ENCODE measurements at regions of chr19 and their contacts with region 1.

Region 1: GRCh38 chr19:35154525-35155406 is at the start of gene FXYD5:
- DNase-seq: peak in 1 of 2 donors; percentile 32
- ATAC-seq: peak in 1 of 2 donors; percentile 59
- H3K4me3 ChIP-seq: peak within 1 kb of the TSS; percentile 53 to 69 (median 56)
- H3K27ac ChIP-seq: peak within 1 kb of the TSS; percentile 68 to 77 (median 74)
- H3K4me1 ChIP-seq: peaks cover 0 to 10% of the 10 kb centered on the region in 2 donors
- H3K27me3 ChIP-seq: peaks cover 30 to 53% (median 39%) of the 10 kb centered on the region in 3 donors
- CTCF ChIP-seq: peak in 1 of 5 experiments; percentile 13
- POLR2A ChIP-seq: peak; percentile 12 to 33
- total RNA-seq, gene FXYD5: 5.2 to 23.3 (median 14.3) TPM

Region 2: GRCh38 chr19:34556488-34556887 is 598.3 kb before region 1 on chr19:
- in situ Hi-C with region 1: no loop called
- intact Hi-C with region 1: no loop called
- DNase-seq: no peak
- ATAC-seq: no peak
- H3K4me3 ChIP-seq: no peak overlapping the region
- H3K27ac ChIP-seq: no peak overlapping the region
- H3K4me1 ChIP-seq: no peaks in the 10 kb centered on the region
- H3K27me3 ChIP-seq: no peaks in the 10 kb centered on the region
- CTCF ChIP-seq: peak in 2 of 5 experiments; percentile 25 to 38
- POLR2A ChIP-seq: no peak

Region 3: DNA sequence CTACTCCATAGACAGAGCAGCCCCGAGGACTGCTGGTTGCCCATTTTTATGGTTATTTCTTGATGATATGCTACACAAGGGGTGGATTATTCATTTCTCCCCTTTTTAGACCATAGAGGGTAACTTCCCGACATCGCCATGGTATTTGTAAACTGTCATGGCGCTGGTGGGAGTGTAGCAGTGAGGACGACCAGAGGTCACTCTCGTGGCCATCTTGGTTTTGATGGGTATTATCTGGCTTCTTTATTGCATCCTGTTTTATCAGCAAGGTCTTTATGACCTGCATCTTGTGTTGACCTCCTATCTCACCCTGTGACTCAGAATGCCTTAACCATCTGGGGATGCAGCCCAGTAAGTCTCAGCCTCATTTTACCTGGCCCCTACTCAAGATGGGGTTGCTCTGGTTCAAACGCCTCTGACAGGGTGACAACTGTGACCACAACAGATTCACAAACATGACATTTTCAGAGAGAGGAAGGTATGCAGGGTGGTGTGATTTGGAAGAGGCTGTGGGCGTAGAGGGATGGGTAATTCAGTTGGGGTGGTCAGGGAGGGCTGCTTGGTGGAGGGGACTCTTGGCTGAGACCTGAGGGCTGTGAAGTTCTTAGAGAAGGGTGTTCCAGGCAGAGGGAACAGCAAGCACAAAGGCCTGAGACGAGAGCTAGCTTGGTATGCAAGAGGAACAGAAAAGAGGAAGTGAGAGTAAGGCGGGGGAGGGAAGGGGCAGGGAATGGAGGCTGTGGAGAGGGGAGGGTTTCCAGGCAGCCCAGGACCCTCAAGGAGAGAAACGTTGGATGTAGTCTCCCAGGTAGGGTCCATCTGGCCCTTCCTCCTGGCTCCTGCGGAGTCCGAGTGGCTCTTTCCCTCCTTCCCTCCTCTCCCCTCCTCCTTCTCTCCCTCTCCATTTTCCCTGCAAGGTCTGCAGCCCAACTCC is 50.3 kb after region 1 on chr19:
- in situ Hi-C with region 1: no loop called
- intact Hi-C with region 1: loop called (anchors 5 kb)
- DNase-seq: no peak
- ATAC-seq: no peak
- H3K4me3 ChIP-seq: no peak overlapping the region
- H3K27ac ChIP-seq: no peak overlapping the region
- H3K4me1 ChIP-seq: no peaks in the 10 kb centered on the region
- H3K27me3 ChIP-seq: no peaks in the 10 kb centered on the region
- CTCF ChIP-seq: no peak
- POLR2A ChIP-seq: no peak

Measured in gastrocnemius medialis (tissue), 4 donors.